ENCODE measurements at regions of chr3 and their contacts with region 1.

Region 1: DNA sequence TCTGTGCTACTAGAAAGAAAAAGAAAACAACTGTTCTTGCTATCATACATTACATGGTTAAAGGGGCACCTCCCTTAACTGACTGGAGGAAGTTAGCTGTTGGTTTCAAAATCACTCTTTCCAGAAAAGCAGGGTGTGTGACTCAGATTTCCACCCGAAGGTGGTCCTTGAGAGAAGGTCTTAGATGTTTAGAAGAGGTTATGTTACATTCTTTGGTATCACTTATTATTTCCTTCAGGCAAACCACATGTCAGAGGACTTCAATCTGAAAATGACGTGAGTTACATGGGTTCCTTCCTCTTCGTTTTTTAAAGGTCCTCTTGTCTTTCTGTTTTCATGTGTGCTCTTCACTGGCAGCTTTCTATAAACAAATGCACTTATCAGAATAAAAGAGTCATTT is 307.9 kb upstream of the CBLB start:
- DNase-seq: peak; percentile 72
- H3K4me3 Mint-ChIP-seq: peak overlapping the region; percentile 57
- H3K27ac Mint-ChIP-seq: peak overlapping the region; percentile 91
- H3K4me1 Mint-ChIP-seq: peaks cover 59% of the 10 kb centered on the region
- H3K27me3 Mint-ChIP-seq: no peaks in the 10 kb centered on the region

Region 2: GRCh38 chr3:105676621-105677300 is 500.0 kb before region 1 on chr3:
- intact Hi-C with region 1: loop called (anchors 1 kb)
- DNase-seq: no peak
- H3K4me3 Mint-ChIP-seq: no peak overlapping the region
- H3K27ac Mint-ChIP-seq: peak overlapping the region; percentile 74
- H3K4me1 Mint-ChIP-seq: peaks cover 23% of the 10 kb centered on the region
- H3K27me3 Mint-ChIP-seq: no peaks in the 10 kb centered on the region

Region 3: DNA sequence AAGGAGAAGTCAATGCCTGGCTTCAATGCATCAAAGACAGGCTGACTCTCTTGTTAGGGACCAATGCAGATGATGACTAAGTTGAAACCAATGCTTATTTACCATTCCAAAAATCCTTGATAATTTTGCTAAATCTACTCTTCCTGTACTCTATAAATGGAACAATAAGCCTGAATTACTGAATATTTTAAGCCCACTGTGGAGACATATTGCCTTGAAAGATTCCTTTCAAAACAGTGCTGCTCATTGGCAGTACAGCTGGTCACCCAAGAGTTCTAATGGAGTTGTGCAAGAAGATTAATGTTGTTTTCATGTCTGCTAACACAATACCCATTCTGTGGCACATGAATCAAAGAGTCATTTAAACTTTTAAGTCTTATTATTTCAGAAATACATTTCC is 126.9 kb before region 1 on chr3:
- intact Hi-C with region 1: loop called (anchors 1 kb)
- DNase-seq: no peak
- H3K4me3 Mint-ChIP-seq: no peak overlapping the region
- H3K27ac Mint-ChIP-seq: peak overlapping the region; percentile 85
- H3K4me1 Mint-ChIP-seq: peaks cover 21% of the 10 kb centered on the region
- H3K27me3 Mint-ChIP-seq: no peaks in the 10 kb centered on the region

Region 4: DNA sequence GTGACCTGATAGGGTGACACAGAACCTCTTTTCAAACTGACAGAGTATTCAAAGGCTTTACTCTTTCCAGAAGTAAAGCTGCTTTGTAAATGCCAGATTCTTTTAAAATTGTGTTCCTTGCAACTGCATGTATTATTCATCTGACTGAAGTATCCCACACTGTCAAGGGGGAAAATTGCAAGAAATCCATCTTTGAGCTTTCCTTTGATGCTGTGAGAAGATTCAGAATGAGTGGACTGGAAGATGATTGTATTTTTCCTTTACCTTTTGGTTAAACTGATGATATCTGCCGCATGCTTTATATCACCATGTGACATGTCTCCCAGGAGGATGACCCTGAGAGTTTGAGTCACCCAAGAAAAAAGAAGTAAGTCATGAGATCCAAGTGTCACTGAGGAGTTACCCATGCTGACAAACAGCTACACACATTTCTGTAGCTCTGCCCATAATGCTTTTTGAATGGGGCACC is 57.1 kb before region 1 on chr3:
- intact Hi-C with region 1: loop called (anchors 1 kb)
- DNase-seq: no peak
- H3K4me3 Mint-ChIP-seq: no peak overlapping the region
- H3K27ac Mint-ChIP-seq: peak overlapping the region; percentile 80
- H3K4me1 Mint-ChIP-seq: peaks cover 23% of the 10 kb centered on the region
- H3K27me3 Mint-ChIP-seq: no peaks in the 10 kb centered on the region

Region 5: DNA sequence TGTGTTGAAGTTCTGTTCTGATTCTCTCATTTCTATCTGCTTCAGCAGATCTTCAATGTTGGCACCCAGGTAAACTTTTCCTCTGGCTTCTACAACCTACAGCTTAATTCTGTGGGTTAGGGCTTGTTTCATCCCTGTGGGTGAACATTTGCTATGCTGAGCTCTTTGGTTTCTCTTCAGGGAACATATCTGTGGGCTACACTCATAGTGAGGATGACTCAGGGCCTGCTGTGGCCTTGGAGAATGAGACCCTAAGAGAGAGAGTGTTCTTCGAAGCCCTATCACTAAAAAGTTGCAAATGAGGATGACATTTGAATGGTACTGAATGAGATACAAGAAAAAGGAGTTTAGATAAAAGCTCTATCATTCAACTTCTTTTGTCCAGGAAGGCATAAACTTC is 38.3 kb after region 1 on chr3:
- intact Hi-C with region 1: loop called (anchors 1 kb)
- DNase-seq: no peak
- H3K4me3 Mint-ChIP-seq: peak overlapping the region; percentile 19
- H3K27ac Mint-ChIP-seq: peak overlapping the region; percentile 79
- H3K4me1 Mint-ChIP-seq: peaks cover 47% of the 10 kb centered on the region
- H3K27me3 Mint-ChIP-seq: no peaks in the 10 kb centered on the region

Region 6: GRCh38 chr3:106299300-106300098 is 122.8 kb after region 1 on chr3:
- intact Hi-C with region 1: no loop called
- DNase-seq: peak; percentile 13
- H3K4me3 Mint-ChIP-seq: no peak overlapping the region
- H3K27ac Mint-ChIP-seq: peak overlapping the region; percentile 66
- H3K4me1 Mint-ChIP-seq: peaks cover 50% of the 10 kb centered on the region
- H3K27me3 Mint-ChIP-seq: no peaks in the 10 kb centered on the region

Region 7: DNA sequence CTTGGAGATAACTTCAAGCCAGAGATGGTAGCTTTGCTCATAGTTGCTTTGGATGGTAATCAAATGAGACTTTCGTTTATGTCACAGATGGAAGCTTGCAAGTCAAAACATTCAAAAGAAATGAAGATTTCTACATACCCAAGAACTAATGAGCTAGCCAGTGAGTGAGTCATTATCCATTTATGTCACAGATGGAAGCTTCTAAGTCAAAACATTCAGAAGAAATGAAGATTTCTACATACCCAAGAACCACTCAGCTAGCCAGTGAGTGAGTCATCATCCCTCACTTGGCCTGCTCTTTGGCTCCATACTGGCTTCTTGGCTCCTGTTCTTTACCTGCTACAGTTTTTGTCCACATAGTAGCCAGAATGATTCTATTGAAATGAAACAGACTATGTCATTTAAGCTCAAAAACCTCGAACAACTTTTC is 251.8 kb after region 1 on chr3:
- intact Hi-C with region 1: loop called (anchors 1 kb)
- DNase-seq: no peak
- H3K4me3 Mint-ChIP-seq: no peak overlapping the region
- H3K27ac Mint-ChIP-seq: peak overlapping the region; percentile 93
- H3K4me1 Mint-ChIP-seq: peaks cover 44% of the 10 kb centered on the region
- H3K27me3 Mint-ChIP-seq: no peaks in the 10 kb centered on the region

Measured in activated T-helper 2 cell treated with anti-CD3 and anti-CD28 coated beads, Interferon-gamma antibody, Interleukin-2, Interleukin-4, amounts not matched to agents 10 μg/mL and 5 μg/mL and 100 μg/mL, durations not matched to agents 14 hours and 24 hours and 36 hours (primary cell).